ENCODE measurements at regions of chr1 and their contacts with region 1.

Region 1: GRCh38 chr1:6727535-6727934 is 25.9 kb upstream of the DNAJC11 start:
- DNase-seq: no peak
- H3K4me3 Mint-ChIP-seq: no peak overlapping the region
- H3K27ac Mint-ChIP-seq: no peak overlapping the region
- H3K4me1 Mint-ChIP-seq: no peaks in the 10 kb centered on the region
- H3K27me3 Mint-ChIP-seq: peaks cover 11% of the 10 kb centered on the region

Region 2: GRCh38 chr1:6889875-6890480 is 162.4 kb after region 1 on chr1:
- intact Hi-C with region 1: loop called (anchors 1 kb)
- DNase-seq: no peak
- H3K4me3 Mint-ChIP-seq: no peak overlapping the region
- H3K27ac Mint-ChIP-seq: no peak overlapping the region
- H3K4me1 Mint-ChIP-seq: no peaks in the 10 kb centered on the region
- H3K27me3 Mint-ChIP-seq: no peaks in the 10 kb centered on the region

Region 3: GRCh38 chr1:7501084-7501491 is 773.6 kb after region 1 on chr1:
- intact Hi-C with region 1: no loop called
- DNase-seq: no peak
- H3K4me3 Mint-ChIP-seq: no peak overlapping the region
- H3K27ac Mint-ChIP-seq: no peak overlapping the region
- H3K4me1 Mint-ChIP-seq: no peaks in the 10 kb centered on the region
- H3K27me3 Mint-ChIP-seq: no peaks in the 10 kb centered on the region